ENCODE measurements at regions of chr15 and their contacts with region 1.

Region 1: GRCh38 chr15:86178845-86179244 is 99.2 kb downstream of the AGBL1 start:
- DNase-seq: peak in 1 of 2 experiments; percentile 9
- H3K4me3 ChIP-seq: no peak overlapping the region
- H3K4me3 Mint-ChIP-seq: no peak overlapping the region
- H3K27ac Mint-ChIP-seq: no peak overlapping the region
- H3K4me1 ChIP-seq: no peaks in the 10 kb centered on the region
- H3K4me1 Mint-ChIP-seq: no peaks in the 10 kb centered on the region
- H3K27me3 ChIP-seq: no peaks in the 10 kb centered on the region
- H3K27me3 Mint-ChIP-seq: peaks cover 7% of the 10 kb centered on the region
- CTCF ChIP-seq: peak; percentile 27 to 42

Region 2: GRCh38 chr15:85854345-85855097 is 324.3 kb before region 1 on chr15:
- CTCF ChIA-PET with region 1: no interaction called
- POLR2A ChIA-PET with region 1: no interaction called
- intact Hi-C with region 1: loop called (anchors 5 kb)
- DNase-seq: peak in 1 of 2 experiments; percentile 66
- H3K4me3 ChIP-seq: no peak overlapping the region
- H3K4me3 Mint-ChIP-seq: no peak overlapping the region
- H3K27ac Mint-ChIP-seq: no peak overlapping the region
- H3K4me1 ChIP-seq: no peaks in the 10 kb centered on the region
- H3K4me1 Mint-ChIP-seq: no peaks in the 10 kb centered on the region
- H3K27me3 ChIP-seq: no peaks in the 10 kb centered on the region
- H3K27me3 Mint-ChIP-seq: peaks cover 18% of the 10 kb centered on the region
- CTCF ChIP-seq: peak; percentile 69 to 73

Region 3: GRCh38 chr15:86115144-86115801 is 63.6 kb before region 1 on chr15:
- CTCF ChIA-PET with region 1: no interaction called
- POLR2A ChIA-PET with region 1: no interaction called
- intact Hi-C with region 1: loop called (anchors 1 kb)
- DNase-seq: no peak
- H3K4me3 ChIP-seq: no peak overlapping the region
- H3K4me3 Mint-ChIP-seq: no peak overlapping the region
- H3K27ac Mint-ChIP-seq: no peak overlapping the region
- H3K4me1 ChIP-seq: no peaks in the 10 kb centered on the region
- H3K4me1 Mint-ChIP-seq: no peaks in the 10 kb centered on the region
- H3K27me3 ChIP-seq: no peaks in the 10 kb centered on the region
- H3K27me3 Mint-ChIP-seq: peaks cover 15% of the 10 kb centered on the region
- CTCF ChIP-seq: peak in 1 of 2 experiments; percentile 16

Measured in Caco-2 (cell line).